MCF 10A (cell line): ENCODE measurements at regions of chr1 and their contacts with region 1.

Region 1: GRCh38 chr1:23184212-23184934 is 15.7 kb upstream of the LUZP1 start:
- DNase-seq: peak; percentile 56
- H3K4me3 Mint-ChIP-seq: no peak overlapping the region
- H3K27ac Mint-ChIP-seq: no peak overlapping the region
- H3K4me1 Mint-ChIP-seq: peaks cover 12% of the 10 kb centered on the region
- H3K27me3 Mint-ChIP-seq: no peaks in the 10 kb centered on the region
- CTCF ChIP-seq: peak; percentile 92

Region 2: GRCh38 chr1:22794647-22795365 is 389.6 kb before region 1 on chr1:
- CTCF ChIA-PET with region 1: no interaction called
- POLR2A ChIA-PET with region 1: no interaction called
- intact Hi-C with region 1: no loop called
- DNase-seq: no peak
- H3K4me3 Mint-ChIP-seq: no peak overlapping the region
- H3K27ac Mint-ChIP-seq: no peak overlapping the region
- H3K4me1 Mint-ChIP-seq: peaks cover 10% of the 10 kb centered on the region
- H3K27me3 Mint-ChIP-seq: no peaks in the 10 kb centered on the region
- CTCF ChIP-seq: no peak

Region 3: GRCh38 chr1:23081376-23081775 is 103.0 kb before region 1 on chr1:
- CTCF ChIA-PET with region 1: interaction called, 21 read pairs
- POLR2A ChIA-PET with region 1: no interaction called
- intact Hi-C with region 1: no loop called
- DNase-seq: no peak
- H3K4me3 Mint-ChIP-seq: no peak overlapping the region
- H3K27ac Mint-ChIP-seq: no peak overlapping the region
- H3K4me1 Mint-ChIP-seq: peaks cover 19% of the 10 kb centered on the region
- H3K27me3 Mint-ChIP-seq: no peaks in the 10 kb centered on the region
- CTCF ChIP-seq: no peak

Region 4: DNA sequence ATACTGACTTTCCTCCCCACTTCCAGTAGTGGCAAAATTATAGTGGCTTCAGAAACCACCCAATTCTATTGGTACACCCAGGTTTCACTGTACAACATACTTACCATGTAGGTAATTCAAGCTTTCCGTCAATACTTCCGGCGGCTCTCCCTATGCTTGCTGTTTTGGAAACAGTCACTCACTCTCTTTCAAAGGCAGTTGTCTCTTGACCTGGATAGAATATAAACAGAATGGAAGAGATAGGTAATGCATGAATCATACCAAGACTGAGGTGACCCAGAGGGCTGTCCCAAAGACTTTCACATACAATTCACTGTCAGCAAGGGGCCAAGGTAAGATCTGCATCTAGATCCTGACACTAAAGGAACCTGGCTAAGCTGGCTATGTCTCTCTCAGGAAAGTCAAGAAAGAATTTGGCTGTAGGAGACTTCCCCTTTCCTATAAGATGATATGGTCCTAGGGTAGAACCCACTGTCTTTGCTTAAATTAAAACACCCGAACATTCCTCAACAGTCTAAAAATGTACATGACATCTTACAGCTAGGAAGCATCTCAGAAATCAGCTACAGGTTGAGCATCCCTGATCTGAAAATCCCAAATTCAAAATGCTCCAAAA is 75.3 kb before region 1 on chr1:
- CTCF ChIA-PET with region 1: interaction called, 405 read pairs
- POLR2A ChIA-PET with region 1: no interaction called
- intact Hi-C with region 1: no loop called
- DNase-seq: no peak
- H3K4me3 Mint-ChIP-seq: no peak overlapping the region
- H3K27ac Mint-ChIP-seq: no peak overlapping the region
- H3K4me1 Mint-ChIP-seq: peaks cover 26% of the 10 kb centered on the region
- H3K27me3 Mint-ChIP-seq: no peaks in the 10 kb centered on the region
- CTCF ChIP-seq: no peak

Region 5: GRCh38 chr1:23168457-23169194 is 15.7 kb before region 1 on chr1 and contains the start of gene LUZP1:
- CTCF ChIA-PET with region 1: interaction called, 65 read pairs
- POLR2A ChIA-PET with region 1: interaction called, 45 read pairs
- intact Hi-C with region 1: no loop called
- DNase-seq: peak; percentile 90
- H3K4me3 Mint-ChIP-seq: peak within 1 kb of the TSS; percentile 89
- H3K27ac Mint-ChIP-seq: peak within 1 kb of the TSS; percentile 89
- H3K4me1 Mint-ChIP-seq: peaks cover 26% of the 10 kb centered on the region
- H3K27me3 Mint-ChIP-seq: no peaks in the 10 kb centered on the region
- CTCF ChIP-seq: no peak
- total RNA-seq, gene LUZP1: 30.1 and 37.2 TPM in 2 replicates

Region 6: DNA sequence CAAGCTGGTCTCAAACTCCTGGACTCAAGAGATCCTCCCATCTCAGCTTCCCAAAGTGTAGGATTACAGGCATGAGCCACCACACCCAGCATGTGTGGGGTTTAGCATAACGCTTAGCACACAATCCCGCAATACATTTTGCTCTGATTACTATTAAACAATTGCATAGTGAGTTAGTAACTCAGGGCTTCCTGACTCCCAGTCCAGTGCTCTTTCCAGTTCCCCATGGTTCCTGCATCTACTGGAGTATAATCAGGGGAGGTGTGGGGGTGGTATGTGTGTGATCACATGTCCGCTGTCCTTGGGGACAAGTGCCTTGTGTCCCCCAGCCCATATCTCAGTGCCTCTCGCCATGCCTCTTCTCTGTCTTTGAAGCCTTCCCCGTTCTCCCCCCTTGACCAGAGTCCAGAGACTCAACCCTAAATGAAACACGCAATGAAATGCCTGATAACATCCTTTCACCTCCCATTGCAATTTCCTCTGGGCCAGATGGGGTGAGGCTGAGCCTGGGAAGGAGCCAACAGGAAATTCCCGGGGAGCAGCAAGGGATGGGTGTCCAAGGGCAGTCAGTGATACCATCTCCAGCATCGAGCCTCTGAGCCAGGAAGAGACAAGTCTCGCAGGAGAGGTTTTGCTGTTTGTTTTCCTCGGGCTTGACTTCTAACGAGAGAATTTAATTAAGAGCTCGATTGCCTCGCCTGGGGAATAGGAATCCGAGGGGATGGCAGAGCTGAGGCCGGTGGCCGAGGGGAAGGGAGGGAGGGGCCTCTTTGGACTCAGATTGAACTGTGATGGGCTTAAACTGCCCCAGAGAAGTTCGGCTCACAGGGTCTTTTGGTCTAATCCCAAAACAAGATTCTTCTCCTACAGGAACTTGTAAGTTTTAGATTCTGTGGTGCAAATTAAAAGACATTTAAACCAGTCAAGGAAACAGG is 40.6 kb after region 1 on chr1:
- CTCF ChIA-PET with region 1: no interaction called
- POLR2A ChIA-PET with region 1: no interaction called
- intact Hi-C with region 1: no loop called
- DNase-seq: peak; percentile 66
- H3K4me3 Mint-ChIP-seq: no peak overlapping the region
- H3K27ac Mint-ChIP-seq: no peak overlapping the region
- H3K4me1 Mint-ChIP-seq: peaks cover 6% of the 10 kb centered on the region
- H3K27me3 Mint-ChIP-seq: no peaks in the 10 kb centered on the region
- CTCF ChIP-seq: no peak